ENCODE measurements at regions of chr10 and their contacts with region 1.

Region 1: DNA sequence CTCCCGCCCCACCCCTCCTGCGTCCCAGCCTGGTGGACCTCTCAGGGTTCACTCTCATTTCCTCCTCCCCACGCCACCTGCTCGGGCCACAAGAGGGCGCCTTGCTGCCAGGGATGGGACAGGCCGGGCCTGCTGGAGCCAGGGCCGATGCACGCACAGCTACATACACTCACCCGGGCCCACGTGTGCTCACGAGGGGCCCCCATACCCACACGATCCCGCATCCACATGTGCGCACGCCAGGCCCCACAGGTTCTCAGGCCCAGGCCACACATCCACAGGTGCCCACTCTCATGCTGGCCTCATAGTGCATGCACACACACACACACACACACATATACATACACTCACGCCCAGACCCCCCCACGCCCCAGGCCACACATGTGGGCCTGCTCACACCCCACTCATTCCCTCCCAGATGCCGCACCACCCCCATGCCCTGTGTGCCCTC is 68.6 kb downstream of the LHPP start:
- DNase-seq: peak; percentile 89 to 93 (median 90)
- H3K4me3 ChIP-seq: no peak overlapping the region
- H3K27ac ChIP-seq: no peak overlapping the region
- H3K4me1 ChIP-seq: peaks cover 19 to 23% of the 10 kb centered on the region in 2 donors
- H3K27me3 ChIP-seq: no peaks in the 10 kb centered on the region
- CTCF ChIP-seq: peak; percentile 88 to 94 (median 91)
- POLR2A ChIP-seq: no peak

Region 2: DNA sequence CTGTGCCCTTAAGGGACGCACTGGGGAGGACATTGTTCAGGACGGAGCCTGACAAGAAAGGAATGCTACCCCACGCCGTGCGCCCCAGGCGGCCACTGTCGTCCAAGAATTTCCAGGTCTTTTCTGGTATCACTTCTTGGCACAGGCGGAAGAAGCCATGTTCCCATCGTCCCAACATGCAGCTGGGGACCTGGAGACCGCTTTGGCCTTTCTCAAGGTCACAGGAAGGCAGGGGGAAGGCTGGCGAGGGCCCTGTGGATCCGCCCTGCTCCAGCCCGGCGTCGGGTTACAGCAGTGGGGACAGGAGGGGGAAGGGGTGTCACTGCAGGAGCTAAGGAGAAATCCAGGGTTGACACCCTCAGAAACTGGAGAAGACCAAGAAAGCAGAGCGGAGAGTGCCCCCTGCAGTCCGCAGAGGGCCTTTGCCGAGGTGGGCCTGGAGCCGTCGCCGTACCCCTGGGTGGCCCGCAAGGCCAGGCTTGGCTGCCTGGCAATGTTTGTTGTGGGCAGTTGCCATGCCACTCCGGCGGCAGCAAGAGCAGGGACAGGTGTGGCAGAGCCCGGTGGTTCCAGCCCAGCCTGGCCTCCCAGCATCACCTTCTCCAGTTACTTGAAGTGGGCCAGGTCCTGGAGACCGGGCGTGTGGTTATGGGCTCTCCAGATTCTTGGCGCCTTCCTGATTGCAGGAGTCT is 35.5 kb after region 1 on chr10:
- intact Hi-C with region 1: no loop called
- DNase-seq: peak in 1 of 7 donors; percentile 27
- H3K4me3 ChIP-seq: no peak overlapping the region
- H3K27ac ChIP-seq: no peak overlapping the region
- H3K4me1 ChIP-seq: peaks cover 0 to 10% of the 10 kb centered on the region in 2 donors
- H3K27me3 ChIP-seq: no peaks in the 10 kb centered on the region
- CTCF ChIP-seq: peak in 4 of 6 experiments; percentile 21 to 35 (median 26)
- POLR2A ChIP-seq: no peak

Region 3: DNA sequence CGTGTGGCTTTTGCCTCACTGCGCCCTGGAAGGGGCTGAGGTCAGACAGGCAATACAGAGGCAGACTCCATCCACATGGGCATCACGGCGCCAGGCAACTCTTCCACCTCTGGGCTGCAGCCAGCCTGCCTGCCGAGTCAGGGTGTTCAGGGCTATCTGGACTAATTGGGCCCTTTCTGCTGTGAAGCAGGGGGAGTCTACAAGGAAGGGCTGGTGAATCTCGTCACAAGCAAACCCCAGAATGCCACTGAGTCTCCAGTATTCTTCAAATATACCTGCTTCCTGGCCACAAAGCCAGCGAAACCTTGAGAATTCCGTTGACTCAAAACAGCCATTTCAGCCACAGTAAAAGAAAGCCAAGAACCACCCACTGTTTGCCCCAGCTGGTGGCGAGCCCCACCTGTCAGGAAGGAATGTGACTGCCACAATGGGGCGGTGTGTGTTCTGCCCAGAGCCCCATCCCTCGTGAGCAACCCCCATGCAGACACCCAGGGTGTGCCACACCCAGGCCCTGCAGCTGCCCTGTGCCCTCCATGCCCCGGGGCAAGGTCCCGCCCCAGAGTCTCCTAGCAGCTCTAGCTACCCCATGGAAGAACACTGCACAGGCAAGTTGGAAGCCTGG is 96.6 kb after region 1 on chr10:
- intact Hi-C with region 1: loop called in 1 of 2 experiments (anchors 10 kb)
- DNase-seq: no peak
- H3K4me3 ChIP-seq: no peak overlapping the region
- H3K27ac ChIP-seq: peak overlapping the region in 3 of 5 donors; percentile 13 to 70 (median 46)
- H3K4me1 ChIP-seq: peaks cover 14 to 56% of the 10 kb centered on the region in 2 donors
- H3K27me3 ChIP-seq: no peaks in the 10 kb centered on the region
- CTCF ChIP-seq: no peak
- POLR2A ChIP-seq: no peak

Region 4: GRCh38 chr10:124741281-124741921 is 211.2 kb after region 1 on chr10:
- intact Hi-C with region 1: loop called (anchors 2 to 5 kb)
- DNase-seq: peak; percentile 85 to 96 (median 92)
- H3K4me3 ChIP-seq: peak overlapping the region in 1 of 4 donors; percentile 79
- H3K27ac ChIP-seq: peak overlapping the region; percentile 44 to 95 (median 90)
- H3K4me1 ChIP-seq: peaks cover 68 to 73% of the 10 kb centered on the region in 2 donors
- H3K27me3 ChIP-seq: no peaks in the 10 kb centered on the region
- CTCF ChIP-seq: peak; percentile 80 to 99 (median 96)
- POLR2A ChIP-seq: peak in 1 of 2 donors; percentile 52

Region 5: GRCh38 chr10:124827474-124827873 is 297.2 kb after region 1 on chr10:
- intact Hi-C with region 1: loop called (anchors 2 to 5 kb)
- DNase-seq: peak in 2 of 7 donors; percentile 32 to 41
- H3K4me3 ChIP-seq: no peak overlapping the region
- H3K27ac ChIP-seq: no peak overlapping the region
- H3K4me1 ChIP-seq: peaks cover 12 to 31% of the 10 kb centered on the region in 2 donors
- H3K27me3 ChIP-seq: no peaks in the 10 kb centered on the region
- CTCF ChIP-seq: peak in 4 of 6 experiments; percentile 40 to 63 (median 60)
- POLR2A ChIP-seq: no peak